ENCODE measurements at regions of chr2 and their contacts with region 1.

Region 1: DNA sequence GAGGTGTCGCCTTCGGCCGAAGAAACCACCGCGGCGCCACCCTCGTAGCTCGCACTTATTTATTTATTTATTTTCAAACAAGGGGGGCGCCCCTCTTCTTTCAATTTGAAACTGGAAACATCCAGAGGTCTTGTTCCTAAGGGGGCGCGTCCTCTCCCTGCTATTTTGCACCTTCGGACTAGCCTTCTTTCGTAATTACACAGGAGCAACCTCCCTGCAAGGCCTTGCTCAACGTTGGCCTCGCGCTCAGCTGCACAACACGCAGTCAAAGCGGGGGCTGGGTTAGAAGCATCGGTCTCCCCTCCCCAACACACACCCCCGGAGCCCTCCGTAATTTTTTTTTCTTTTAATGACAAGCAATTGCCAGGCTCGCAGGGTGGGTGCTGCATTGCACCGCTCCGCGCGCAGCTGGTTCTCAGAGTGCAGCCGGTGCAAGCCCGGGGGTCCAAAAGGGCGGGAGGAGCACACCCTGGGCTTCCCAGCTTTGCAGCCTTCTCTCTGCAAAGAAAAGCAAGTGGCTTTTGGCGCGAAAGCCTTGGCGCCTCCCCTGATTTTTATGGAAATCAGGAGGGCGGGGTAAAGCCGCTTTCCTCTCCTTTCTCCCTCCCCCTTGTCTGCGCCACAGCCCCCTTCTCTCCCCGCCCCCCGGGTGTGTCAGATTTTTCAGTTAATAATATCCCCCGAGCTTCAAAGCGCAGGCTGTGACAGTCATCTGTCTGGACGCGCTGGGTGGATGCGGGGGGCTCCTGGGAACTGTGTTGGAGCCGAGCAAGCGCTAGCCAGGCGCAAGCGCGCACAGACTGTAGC is at the start of gene MYCN:
- DNase-seq: no peak
- H3K4me3 ChIP-seq: peak within 1 kb of the TSS; percentile 14 to 52 (median 44)
- H3K27ac ChIP-seq: no peak within 1 kb of the TSS
- H3K4me1 ChIP-seq: peaks cover 0 to 48% (median 40%) of the 10 kb centered on the region in 4 donors
- H3K27me3 ChIP-seq: peaks cover 31 to 46% (median 34%) of the 10 kb centered on the region in 3 donors
- CTCF ChIP-seq: peak in 2 of 4 experiments; percentile 5 to 55
- EP300 ChIP-seq: no peak
- POLR2A ChIP-seq: no peak
- total RNA-seq, gene MYCN: 0.33 to 0.71 (median 0.55) TPM

Region 2: GRCh38 chr2:16012619-16013358 is 72.7 kb after region 1 on chr2:
- intact Hi-C with region 1: no loop called
- DNase-seq: no peak
- H3K4me3 ChIP-seq: no peak overlapping the region
- H3K27ac ChIP-seq: no peak overlapping the region
- H3K4me1 ChIP-seq: peaks cover 0 to 7% (median 0%) of the 10 kb centered on the region in 4 donors
- H3K27me3 ChIP-seq: peaks cover 0 to 49% (median 29%) of the 10 kb centered on the region in 3 donors
- CTCF ChIP-seq: no peak
- EP300 ChIP-seq: no peak
- POLR2A ChIP-seq: no peak

Region 3: GRCh38 chr2:16281451-16282336 is 341.6 kb after region 1 on chr2:
- intact Hi-C with region 1: loop called (anchors 10 kb)
- DNase-seq: no peak
- H3K4me3 ChIP-seq: no peak overlapping the region
- H3K27ac ChIP-seq: no peak overlapping the region
- H3K4me1 ChIP-seq: no peaks in the 10 kb centered on the region
- H3K27me3 ChIP-seq: no peaks in the 10 kb centered on the region
- CTCF ChIP-seq: peak in 2 of 4 experiments; percentile 16 to 45
- EP300 ChIP-seq: no peak
- POLR2A ChIP-seq: no peak

Region 4: GRCh38 chr2:16303273-16303577 is 363.2 kb after region 1 on chr2:
- intact Hi-C with region 1: no loop called
- DNase-seq: no peak
- H3K4me3 ChIP-seq: no peak overlapping the region
- H3K27ac ChIP-seq: no peak overlapping the region
- H3K4me1 ChIP-seq: no peaks in the 10 kb centered on the region
- H3K27me3 ChIP-seq: no peaks in the 10 kb centered on the region
- CTCF ChIP-seq: no peak
- EP300 ChIP-seq: no peak
- POLR2A ChIP-seq: no peak

Region 5: GRCh38 chr2:16507655-16508489 is 567.8 kb after region 1 on chr2:
- intact Hi-C with region 1: loop called (anchors 10 kb)
- DNase-seq: no peak
- H3K4me3 ChIP-seq: peak overlapping the region in 3 of 4 donors; percentile 25 to 51 (median 41)
- H3K27ac ChIP-seq: no peak overlapping the region
- H3K4me1 ChIP-seq: peaks cover 0 to 9% (median 9%) of the 10 kb centered on the region in 4 donors
- H3K27me3 ChIP-seq: peaks cover 0 to 24% (median 12%) of the 10 kb centered on the region in 3 donors
- CTCF ChIP-seq: peak in 3 of 4 experiments; percentile 14 to 68 (median 26)
- EP300 ChIP-seq: no peak
- POLR2A ChIP-seq: no peak

Region 6: GRCh38 chr2:16608661-16609643 is 668.9 kb after region 1 on chr2:
- intact Hi-C with region 1: loop called (anchors 5 kb)
- DNase-seq: peak; percentile 89
- H3K4me3 ChIP-seq: peak overlapping the region in 3 of 4 donors; percentile 35 to 39 (median 38)
- H3K27ac ChIP-seq: peak overlapping the region in 2 of 4 donors; percentile 20 to 26
- H3K4me1 ChIP-seq: peaks cover 0 to 9% (median 2%) of the 10 kb centered on the region in 4 donors
- H3K27me3 ChIP-seq: no peaks in the 10 kb centered on the region
- CTCF ChIP-seq: peak; percentile 64 to 95 (median 86)
- EP300 ChIP-seq: no peak
- POLR2A ChIP-seq: no peak